PC-9 (cell line): ENCODE measurements at regions of chr14 and their contacts with region 1.

Region 1: DNA sequence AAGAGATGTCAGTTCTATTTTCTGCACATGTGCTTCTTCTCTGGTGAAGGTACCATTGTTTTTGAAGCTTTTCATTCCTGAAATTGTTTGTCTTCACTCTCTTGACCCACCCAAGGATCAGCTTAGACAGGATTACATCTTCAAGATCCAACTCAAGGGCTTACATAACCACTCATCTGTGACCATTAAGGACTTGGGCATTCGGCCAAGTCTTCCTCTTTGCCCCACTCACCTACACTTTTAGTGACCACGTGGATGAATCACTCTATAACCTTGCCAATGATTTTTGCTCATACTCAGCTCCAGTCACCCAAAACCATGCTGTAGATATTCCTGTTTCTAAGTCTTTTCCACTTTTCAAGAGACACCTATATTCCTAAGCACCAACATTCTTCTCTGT is 36.5 kb upstream of the SSTR1 start:
- DNase-seq: peak in 1 of 2 experiments; percentile 12
- H3K4me3 ChIP-seq: no peak overlapping the region
- H3K27ac ChIP-seq: no peak overlapping the region
- H3K4me1 ChIP-seq: peaks cover 16% of the 10 kb centered on the region
- H3K27me3 ChIP-seq: no peaks in the 10 kb centered on the region
- CTCF ChIP-seq: no peak

Region 2: DNA sequence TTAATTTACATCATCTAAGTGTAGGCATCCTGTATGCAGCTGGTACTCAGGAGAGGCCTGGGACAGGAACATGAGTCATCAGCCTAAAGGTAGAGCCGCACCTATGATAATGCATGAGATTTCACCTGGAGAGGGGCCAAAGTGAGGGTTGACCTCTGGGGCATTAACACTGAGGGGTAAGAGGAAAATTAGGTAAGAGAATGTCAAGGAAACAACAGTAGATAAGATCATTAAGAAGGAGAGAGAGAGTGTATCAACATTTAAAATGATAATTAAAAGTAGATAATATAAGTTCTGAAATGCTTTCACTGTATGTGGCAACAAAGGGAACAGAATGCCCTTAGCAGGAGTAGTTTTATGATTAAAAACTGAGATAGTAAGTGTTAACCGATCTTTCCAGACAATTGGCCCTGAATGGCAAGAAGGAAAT is 16.4 kb after region 1 on chr14:
- CTCF ChIA-PET with region 1: no interaction called
- POLR2A ChIA-PET with region 1: no interaction called
- intact Hi-C with region 1: no loop called
- DNase-seq: peak; percentile 34 to 68
- H3K4me3 ChIP-seq: no peak overlapping the region
- H3K27ac ChIP-seq: no peak overlapping the region
- H3K4me1 ChIP-seq: peaks cover 16% of the 10 kb centered on the region
- H3K27me3 ChIP-seq: no peaks in the 10 kb centered on the region
- CTCF ChIP-seq: no peak

Region 3: GRCh38 chr14:38420048-38420447 is 248.9 kb after region 1 on chr14:
- CTCF ChIA-PET with region 1: no interaction called
- POLR2A ChIA-PET with region 1: no interaction called
- intact Hi-C with region 1: no loop called
- DNase-seq: no peak
- H3K4me3 ChIP-seq: no peak overlapping the region
- H3K27ac ChIP-seq: no peak overlapping the region
- H3K4me1 ChIP-seq: no peaks in the 10 kb centered on the region
- H3K27me3 ChIP-seq: no peaks in the 10 kb centered on the region
- CTCF ChIP-seq: no peak

Region 4: GRCh38 chr14:38705220-38705619 is 534.0 kb after region 1 on chr14:
- CTCF ChIA-PET with region 1: no interaction called
- POLR2A ChIA-PET with region 1: interaction called, 10 read pairs
- intact Hi-C with region 1: no loop called
- DNase-seq: no peak
- H3K4me3 ChIP-seq: no peak overlapping the region
- H3K27ac ChIP-seq: no peak overlapping the region
- H3K4me1 ChIP-seq: no peaks in the 10 kb centered on the region
- H3K27me3 ChIP-seq: no peaks in the 10 kb centered on the region
- CTCF ChIP-seq: no peak